BJ (cell line): ENCODE measurements at regions of chr6 and their contacts with region 1.

Region 1: DNA sequence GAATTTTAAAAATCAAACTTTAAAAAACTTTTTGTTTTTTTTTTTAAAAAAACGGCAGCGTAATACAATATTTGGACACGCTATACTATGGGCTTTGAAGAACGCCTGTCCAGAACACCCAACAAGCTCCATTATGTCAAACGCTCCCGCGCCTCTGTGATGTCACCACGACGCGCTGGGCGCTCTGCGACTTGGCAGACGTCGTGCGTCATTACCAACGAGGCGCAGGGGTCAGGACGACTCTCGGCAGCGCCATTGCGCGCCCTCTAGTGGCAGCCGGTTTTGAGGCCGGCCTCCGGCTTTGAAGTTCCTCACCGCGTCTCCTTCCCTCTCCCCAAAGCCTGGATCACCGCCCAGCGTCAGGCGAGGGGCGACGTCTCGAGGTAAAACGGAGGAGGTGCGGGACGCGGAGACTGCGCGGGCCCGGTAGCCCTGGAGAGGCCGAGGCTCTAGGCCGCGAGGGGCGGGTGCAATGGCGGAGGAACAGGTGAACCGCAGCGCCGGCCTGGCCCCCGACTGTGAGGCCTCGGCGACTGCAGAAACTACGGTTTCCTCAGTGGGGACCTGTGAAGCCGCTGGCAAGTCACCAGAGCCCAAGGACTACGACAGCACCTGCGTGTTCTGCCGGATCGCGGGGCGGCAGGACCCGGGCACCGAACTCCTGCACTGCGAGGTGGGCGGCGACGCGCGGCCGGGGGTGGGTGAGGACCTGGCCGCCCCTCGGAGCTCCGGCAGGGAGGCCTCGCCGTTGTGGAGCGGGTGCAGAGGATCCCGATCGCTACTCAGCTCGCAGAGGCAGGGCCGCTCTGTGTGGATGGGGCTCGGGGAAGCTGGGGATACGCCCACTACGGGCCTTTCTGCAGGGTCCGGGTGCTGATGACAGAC is at the start of gene HINT3:
- DNase-seq: peak; percentile 66
- H3K4me3 ChIP-seq: peak within 1 kb of the TSS; percentile 93
- H3K27me3 ChIP-seq: no peaks in the 10 kb centered on the region
- CTCF ChIP-seq: peak; percentile 96
- polyA plus RNA-seq, gene HINT3: 1.3 and 3.1 TPM in 2 replicates

Region 2: DNA sequence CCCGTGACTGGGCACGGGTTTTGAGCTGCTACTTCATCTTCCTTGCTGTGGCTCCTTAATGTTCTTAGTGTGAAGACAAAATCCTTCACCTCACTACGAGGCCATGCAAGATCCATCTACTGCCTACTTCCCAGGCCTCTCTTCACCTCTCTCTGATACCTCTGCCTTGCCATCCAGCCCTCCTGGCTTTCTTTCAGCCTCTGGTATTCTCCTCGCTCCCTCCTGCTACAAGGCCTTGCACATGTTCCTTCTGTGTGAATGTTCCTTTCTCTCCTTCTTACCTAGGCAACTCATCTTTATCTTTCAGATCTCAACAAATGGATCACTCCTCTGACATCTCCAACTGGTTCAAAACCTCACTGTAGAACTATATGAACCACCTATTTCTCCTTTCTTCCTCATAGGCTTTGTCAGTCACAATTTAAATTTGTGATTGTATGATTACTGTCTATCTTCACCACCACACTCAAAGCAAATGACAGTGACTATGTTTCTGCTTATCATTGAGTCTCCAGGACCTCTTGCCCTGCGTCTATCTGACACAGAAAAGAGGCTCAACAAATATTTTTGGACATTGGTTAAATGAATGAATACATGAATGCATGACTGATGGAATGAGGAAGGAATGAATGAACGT is 187.5 kb before region 1 on chr6:
- CTCF ChIA-PET with region 1: no interaction called
- POLR2A ChIA-PET with region 1: no interaction called
- DNase-seq: no peak
- H3K4me3 ChIP-seq: no peak overlapping the region
- H3K27me3 ChIP-seq: peaks cover 7% of the 10 kb centered on the region
- CTCF ChIP-seq: no peak

Region 3: GRCh38 chr6:125790358-125791150 is 166.2 kb before region 1 on chr6 and contains the start of gene NCOA7:
- CTCF ChIA-PET with region 1: interaction called, 49 read pairs
- POLR2A ChIA-PET with region 1: interaction called, 4 read pairs
- DNase-seq: no peak
- H3K4me3 ChIP-seq: peak within 1 kb of the TSS; percentile 79
- H3K27me3 ChIP-seq: no peaks in the 10 kb centered on the region
- CTCF ChIP-seq: no peak
- polyA plus RNA-seq, gene NCOA7: 27.2 and 29.7 TPM in 2 replicates

Region 4: DNA sequence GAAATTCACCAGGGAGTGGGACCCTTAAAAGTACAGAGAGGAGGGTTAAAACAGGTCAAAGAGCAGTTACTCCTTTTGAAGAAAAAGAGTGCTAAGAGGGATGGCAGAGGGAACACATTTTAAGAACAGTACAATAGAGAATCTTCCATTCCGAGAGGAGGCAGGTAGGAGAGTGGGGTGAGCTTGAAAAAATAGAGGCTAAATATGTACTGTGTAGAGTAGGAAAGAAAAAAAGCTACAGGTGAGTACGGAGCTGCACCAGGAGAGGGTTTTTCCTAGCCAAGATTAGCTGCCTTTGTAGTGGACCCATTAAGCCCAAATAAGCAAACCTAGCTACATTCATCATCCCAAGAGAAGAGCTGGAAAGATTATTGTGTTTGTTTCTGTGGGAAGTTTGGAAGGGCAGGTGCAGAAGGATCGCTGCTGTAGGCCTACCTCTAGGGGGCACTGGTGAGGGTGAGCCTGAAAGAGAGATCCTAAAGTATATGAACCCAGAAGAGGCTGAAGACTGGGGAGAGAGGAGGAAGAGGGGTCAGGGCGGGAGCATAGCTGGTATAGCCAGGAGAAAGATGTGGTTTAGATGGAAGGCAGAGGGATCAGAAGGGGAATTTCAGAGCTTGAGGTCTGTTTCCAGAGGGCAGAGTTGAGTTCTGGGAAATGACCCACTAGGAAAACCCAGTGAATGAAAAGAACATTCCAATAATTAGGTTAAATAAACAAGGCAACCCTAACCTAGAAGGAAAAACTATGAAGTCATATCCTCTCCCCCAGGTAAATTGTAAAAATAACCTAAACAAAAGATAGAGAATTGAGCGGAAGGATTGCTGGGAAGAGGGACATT is 50.4 kb before region 1 on chr6:
- CTCF ChIA-PET with region 1: interaction called, 13 read pairs
- POLR2A ChIA-PET with region 1: no interaction called
- DNase-seq: no peak
- H3K4me3 ChIP-seq: no peak overlapping the region
- H3K27me3 ChIP-seq: no peaks in the 10 kb centered on the region
- CTCF ChIP-seq: peak; percentile 74

Region 5: DNA sequence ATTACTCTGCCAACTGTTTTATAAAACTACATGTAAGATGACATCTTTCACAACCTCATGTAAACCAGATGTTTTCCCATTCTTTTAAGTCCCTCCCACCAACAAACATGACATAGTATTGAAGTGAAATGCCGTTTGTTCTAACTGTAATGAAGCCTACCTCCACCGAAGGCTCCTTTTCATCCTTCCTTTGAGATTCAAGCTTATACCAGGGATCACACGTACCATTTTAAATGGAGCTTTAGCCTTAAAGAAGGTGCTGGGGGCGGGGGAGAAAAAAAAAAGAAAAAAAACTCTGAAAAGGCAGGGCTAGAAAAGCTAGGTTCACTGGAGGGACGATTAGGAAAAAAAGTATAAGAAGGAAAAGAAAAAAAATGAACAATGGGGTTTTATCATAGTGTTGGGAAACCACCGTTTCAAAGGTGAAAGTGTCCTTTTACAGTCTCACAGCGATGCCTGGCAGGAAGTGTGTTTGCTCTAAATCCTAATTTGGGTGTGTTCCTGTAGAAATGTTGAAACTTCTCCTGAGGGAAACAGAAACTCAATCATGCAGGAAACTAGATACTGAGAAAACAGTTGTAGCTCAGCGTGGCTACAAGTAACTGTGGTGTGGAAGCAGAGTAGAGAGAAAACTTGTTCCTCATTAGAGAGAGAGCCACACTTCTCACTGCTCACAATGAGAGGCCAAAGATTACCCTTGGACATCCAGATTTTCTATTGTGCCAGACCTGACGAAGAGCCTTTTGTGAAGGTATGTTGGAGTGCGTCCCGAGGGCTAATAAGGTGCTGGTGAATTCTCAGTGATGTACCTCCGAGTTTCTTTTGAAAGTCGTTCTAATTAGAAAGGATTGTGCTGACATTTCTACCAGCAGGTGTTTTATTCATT is 37.8 kb before region 1 on chr6:
- CTCF ChIA-PET with region 1: interaction called, 23 read pairs
- POLR2A ChIA-PET with region 1: interaction called, 6 read pairs
- DNase-seq: no peak
- H3K4me3 ChIP-seq: 0 out of 2 replicates have a peak overlapping the region, but pooled peaks have one; percentile 12
- H3K27me3 ChIP-seq: no peaks in the 10 kb centered on the region
- CTCF ChIP-seq: no peak

Region 6: GRCh38 chr6:125974214-125974866 is 17.6 kb after region 1 on chr6:
- CTCF ChIA-PET with region 1: interaction called, 17 read pairs
- POLR2A ChIA-PET with region 1: no interaction called
- DNase-seq: no peak
- H3K4me3 ChIP-seq: no peak overlapping the region
- H3K27me3 ChIP-seq: no peaks in the 10 kb centered on the region
- CTCF ChIP-seq: peak; percentile 42; the same call in 1 of the 2 replicates

Region 7: DNA sequence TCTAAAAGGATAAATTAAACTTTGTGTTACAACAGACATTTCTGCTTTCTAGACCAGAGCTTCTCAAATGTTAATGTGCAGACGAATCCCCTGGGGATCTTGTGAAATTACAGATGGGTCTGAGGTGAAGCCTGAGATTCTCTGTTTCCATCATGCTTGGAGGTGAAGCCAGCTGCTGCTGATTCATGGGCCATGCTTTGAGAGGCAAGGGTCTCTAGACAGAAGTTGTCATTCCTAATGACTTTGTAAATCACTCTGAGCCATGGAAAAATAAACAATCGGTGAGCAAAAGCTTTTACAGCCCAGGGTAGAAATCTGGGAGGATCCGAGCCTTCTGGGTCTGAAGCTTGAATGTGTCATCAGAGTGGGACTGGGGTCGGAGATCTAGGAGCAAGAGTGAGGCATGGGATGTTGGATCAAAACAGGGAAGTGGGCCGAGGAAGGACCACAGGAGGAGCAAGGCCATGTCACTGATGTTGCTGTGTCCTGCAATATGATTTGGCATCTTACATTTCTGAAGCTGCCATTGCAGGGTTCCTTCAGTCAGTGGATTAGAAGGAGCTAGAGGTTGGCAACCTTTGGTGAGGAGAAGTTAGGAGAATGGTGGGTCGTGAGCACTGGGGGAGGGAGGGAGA is 106.9 kb after region 1 on chr6:
- CTCF ChIA-PET with region 1: no interaction called
- POLR2A ChIA-PET with region 1: no interaction called
- DNase-seq: no peak
- H3K4me3 ChIP-seq: no peak overlapping the region
- H3K27me3 ChIP-seq: no peaks in the 10 kb centered on the region
- CTCF ChIP-seq: no peak